ENCODE measurements at regions of chr4 and their contacts with region 1.

Region 1: DNA sequence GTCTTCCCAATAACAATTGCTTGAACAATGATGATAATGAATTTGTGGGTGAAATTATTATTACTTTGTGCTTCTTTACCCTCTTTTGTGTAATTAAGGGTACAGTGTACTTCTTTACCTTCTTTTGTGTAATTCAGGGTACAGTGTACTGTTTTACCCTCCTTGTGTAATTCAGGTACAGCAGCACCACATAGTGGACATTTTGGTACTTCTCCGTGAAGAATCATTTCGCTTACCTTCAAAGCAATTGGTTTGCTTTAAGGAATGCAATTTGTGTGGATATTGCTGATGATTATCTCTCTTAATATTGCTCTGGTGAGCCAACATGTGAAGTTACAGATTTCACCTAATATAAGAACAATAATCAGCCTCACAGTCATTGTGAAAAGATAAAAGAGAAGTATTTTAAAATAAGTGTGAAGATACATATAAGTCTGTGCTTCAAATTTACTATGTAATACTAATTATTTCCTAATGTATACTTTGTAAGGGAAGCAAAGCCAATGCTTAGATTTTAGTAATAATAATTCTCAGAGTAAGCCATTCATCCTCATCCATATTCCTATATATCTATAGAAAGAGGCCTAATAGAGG is 27.2 kb upstream of the SEC24B start:
- DNase-seq: peak in 4 of 9 experiments; percentile 26 to 73 (median 46)
- ATAC-seq: peak; percentile 57
- H3K4me3 ChIP-seq: no peak overlapping the region
- H3K4me3 Mint-ChIP-seq: no peak overlapping the region
- H3K27ac ChIP-seq: no peak overlapping the region
- H3K27ac Mint-ChIP-seq: no peak overlapping the region
- H3K4me1 ChIP-seq: no peaks in the 10 kb centered on the region
- H3K4me1 Mint-ChIP-seq: no peaks in the 10 kb centered on the region
- H3K27me3 ChIP-seq: no peaks in the 10 kb centered on the region
- H3K27me3 Mint-ChIP-seq: peaks cover 2% of the 10 kb centered on the region
- CTCF ChIP-seq: peak; percentile 72

Region 2: DNA sequence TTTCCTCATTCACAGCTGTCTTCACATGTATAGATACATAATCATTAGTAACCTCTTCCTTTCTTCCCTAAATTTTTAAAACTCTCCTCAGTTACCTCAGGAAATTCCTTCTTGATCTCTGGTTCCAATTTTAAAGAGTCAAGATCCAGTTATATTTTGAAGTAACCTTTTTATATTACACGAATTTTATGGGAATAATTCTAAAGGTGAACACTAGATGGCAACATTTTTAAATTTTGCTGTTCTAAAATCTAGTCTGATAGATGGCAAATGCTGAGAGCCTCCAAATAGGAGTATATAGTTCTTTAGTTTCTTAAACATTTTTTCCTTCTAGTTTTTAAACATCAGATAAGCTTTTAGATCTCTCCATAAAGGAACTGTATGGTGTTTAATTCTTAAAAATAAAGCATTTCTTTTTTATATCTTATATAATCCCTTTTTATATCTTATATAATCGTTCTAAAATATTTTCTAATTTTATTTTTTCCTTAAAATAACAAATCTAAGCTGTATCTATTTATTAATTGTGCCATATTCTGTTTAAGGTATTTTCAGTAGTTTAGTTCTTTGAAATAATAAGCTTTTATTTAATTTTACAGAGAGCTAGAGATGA is 1648.5 kb before region 1 on chr4:
- CTCF ChIA-PET with region 1: interaction called, 6 read pairs
- POLR2A ChIA-PET with region 1: no interaction called
- intact Hi-C with region 1: loop called (anchors 2 to 5 kb)
- DNase-seq: peak in 2 of 9 experiments; percentile 15 to 40
- ATAC-seq: no peak
- H3K4me3 ChIP-seq: no peak overlapping the region
- H3K4me3 Mint-ChIP-seq: no peak overlapping the region
- H3K27ac ChIP-seq: no peak overlapping the region
- H3K27ac Mint-ChIP-seq: no peak overlapping the region
- H3K4me1 ChIP-seq: no peaks in the 10 kb centered on the region
- H3K4me1 Mint-ChIP-seq: no peaks in the 10 kb centered on the region
- H3K27me3 ChIP-seq: no peaks in the 10 kb centered on the region
- H3K27me3 Mint-ChIP-seq: peaks cover 10% of the 10 kb centered on the region
- CTCF ChIP-seq: peak; percentile 76

Region 3: DNA sequence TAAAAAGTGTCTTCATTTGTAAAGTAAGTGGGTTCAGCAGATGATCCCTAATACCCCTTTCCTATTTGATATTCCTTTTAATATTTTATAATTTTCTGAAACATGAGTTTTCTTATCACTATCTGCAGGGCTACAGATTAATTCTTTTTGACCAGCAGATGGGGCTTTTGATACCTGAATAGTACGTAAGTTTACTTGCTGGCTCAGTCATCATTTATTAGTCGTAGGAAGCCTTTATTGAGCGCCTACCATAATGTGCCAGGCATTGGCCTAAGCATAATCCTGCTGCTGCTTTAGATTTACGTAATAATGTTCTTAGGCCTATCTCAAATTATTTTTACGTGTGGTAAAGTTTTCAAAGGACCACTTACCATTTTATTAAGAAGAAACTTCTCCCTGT is 723.0 kb before region 1 on chr4:
- CTCF ChIA-PET with region 1: interaction called, 3 read pairs
- POLR2A ChIA-PET with region 1: no interaction called
- intact Hi-C with region 1: loop called (anchors 2 to 5 kb)
- DNase-seq: peak in 1 of 9 experiments; percentile 15
- ATAC-seq: no peak
- H3K4me3 ChIP-seq: no peak overlapping the region
- H3K4me3 Mint-ChIP-seq: no peak overlapping the region
- H3K27ac ChIP-seq: no peak overlapping the region
- H3K27ac Mint-ChIP-seq: no peak overlapping the region
- H3K4me1 ChIP-seq: no peaks in the 10 kb centered on the region
- H3K4me1 Mint-ChIP-seq: no peaks in the 10 kb centered on the region
- H3K27me3 ChIP-seq: no peaks in the 10 kb centered on the region
- H3K27me3 Mint-ChIP-seq: no peaks in the 10 kb centered on the region
- CTCF ChIP-seq: no peak

Region 4: DNA sequence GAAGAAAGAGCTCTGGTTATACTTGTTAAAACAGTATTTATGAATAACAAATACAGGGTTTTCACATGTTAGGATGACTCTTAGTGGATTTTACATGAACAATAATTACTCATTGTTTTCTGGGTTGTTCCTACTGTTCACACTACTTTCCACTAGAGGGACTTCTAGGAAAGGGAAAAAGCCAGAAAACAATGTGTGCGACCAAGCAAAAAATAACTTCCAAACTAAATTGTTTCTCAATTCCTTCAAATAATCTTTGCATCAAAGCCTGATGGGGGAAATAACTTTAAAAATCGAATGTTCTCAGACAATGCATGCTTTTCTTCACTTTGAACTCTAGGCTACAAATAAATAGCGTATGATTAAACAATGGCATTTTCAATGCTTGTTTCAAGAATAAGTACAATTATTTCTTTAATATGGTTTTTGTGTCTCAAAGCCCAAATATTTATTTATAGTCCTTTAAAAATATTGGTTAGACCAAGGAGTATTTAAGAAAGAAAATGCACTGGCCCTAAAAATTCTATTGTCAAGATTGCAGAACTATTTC is 571.5 kb before region 1 on chr4:
- CTCF ChIA-PET with region 1: interaction called, 3 read pairs
- POLR2A ChIA-PET with region 1: no interaction called
- intact Hi-C with region 1: loop called in 1 of 2 experiments (anchors 2 kb)
- DNase-seq: peak in 1 of 9 experiments; percentile 7
- ATAC-seq: no peak
- H3K4me3 ChIP-seq: no peak overlapping the region
- H3K4me3 Mint-ChIP-seq: no peak overlapping the region
- H3K27ac ChIP-seq: no peak overlapping the region
- H3K27ac Mint-ChIP-seq: no peak overlapping the region
- H3K4me1 ChIP-seq: no peaks in the 10 kb centered on the region
- H3K4me1 Mint-ChIP-seq: no peaks in the 10 kb centered on the region
- H3K27me3 ChIP-seq: peaks cover 0 to 3% of the 10 kb centered on the region in 2 experiments
- H3K27me3 Mint-ChIP-seq: peaks cover 2% of the 10 kb centered on the region
- CTCF ChIP-seq: no peak

Region 5: DNA sequence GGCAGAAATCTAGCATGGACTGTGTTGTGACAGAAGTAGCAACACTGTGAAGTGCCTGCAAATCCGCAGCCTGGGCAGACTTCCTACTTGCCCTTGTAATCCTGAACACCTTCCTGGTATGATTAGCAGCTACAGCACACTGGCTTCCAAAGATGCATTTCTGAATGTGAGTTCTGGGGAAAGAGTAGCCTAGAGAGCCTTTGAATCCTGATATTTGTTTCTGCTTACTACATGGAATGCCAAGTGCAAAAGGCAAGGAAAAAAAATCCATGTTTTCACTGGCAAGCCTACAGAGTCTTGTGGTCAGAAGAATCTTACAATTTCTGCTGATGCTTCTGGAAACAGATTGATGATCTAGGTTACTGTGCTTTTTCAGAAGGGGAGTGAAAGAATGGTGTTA is 327.7 kb before region 1 on chr4:
- CTCF ChIA-PET with region 1: no interaction called
- POLR2A ChIA-PET with region 1: no interaction called
- intact Hi-C with region 1: loop called in 1 of 2 experiments (anchors 5 kb)
- DNase-seq: no peak
- ATAC-seq: no peak
- H3K4me3 ChIP-seq: no peak overlapping the region
- H3K4me3 Mint-ChIP-seq: no peak overlapping the region
- H3K27ac ChIP-seq: no peak overlapping the region
- H3K27ac Mint-ChIP-seq: no peak overlapping the region
- H3K4me1 ChIP-seq: no peaks in the 10 kb centered on the region
- H3K4me1 Mint-ChIP-seq: no peaks in the 10 kb centered on the region
- H3K27me3 ChIP-seq: no peaks in the 10 kb centered on the region
- H3K27me3 Mint-ChIP-seq: peaks cover 5% of the 10 kb centered on the region
- CTCF ChIP-seq: no peak

Measured in CD8-positive, alpha-beta T cell (primary cell).